Right lobe of liver (tissue), 6 donors: ENCODE measurements at regions of chr4 and their contacts with region 1.

Region 1: GRCh38 chr4:88659055-88659889 is 38.4 kb downstream of the NAP1L5 start:
- DNase-seq: peak in 2 of 3 donors; percentile 27 to 51
- ATAC-seq: peak; percentile 93 to 98 (median 96)
- H3K4me3 ChIP-seq: no peak overlapping the region
- H3K27ac ChIP-seq: no peak overlapping the region
- H3K4me1 ChIP-seq: peaks cover 0 to 17% (median 3%) of the 10 kb centered on the region in 4 donors
- H3K27me3 ChIP-seq: no peaks in the 10 kb centered on the region
- CTCF ChIP-seq: peak; percentile 72 to 86 (median 82)
- POLR2A ChIP-seq: no peak

Region 2: DNA sequence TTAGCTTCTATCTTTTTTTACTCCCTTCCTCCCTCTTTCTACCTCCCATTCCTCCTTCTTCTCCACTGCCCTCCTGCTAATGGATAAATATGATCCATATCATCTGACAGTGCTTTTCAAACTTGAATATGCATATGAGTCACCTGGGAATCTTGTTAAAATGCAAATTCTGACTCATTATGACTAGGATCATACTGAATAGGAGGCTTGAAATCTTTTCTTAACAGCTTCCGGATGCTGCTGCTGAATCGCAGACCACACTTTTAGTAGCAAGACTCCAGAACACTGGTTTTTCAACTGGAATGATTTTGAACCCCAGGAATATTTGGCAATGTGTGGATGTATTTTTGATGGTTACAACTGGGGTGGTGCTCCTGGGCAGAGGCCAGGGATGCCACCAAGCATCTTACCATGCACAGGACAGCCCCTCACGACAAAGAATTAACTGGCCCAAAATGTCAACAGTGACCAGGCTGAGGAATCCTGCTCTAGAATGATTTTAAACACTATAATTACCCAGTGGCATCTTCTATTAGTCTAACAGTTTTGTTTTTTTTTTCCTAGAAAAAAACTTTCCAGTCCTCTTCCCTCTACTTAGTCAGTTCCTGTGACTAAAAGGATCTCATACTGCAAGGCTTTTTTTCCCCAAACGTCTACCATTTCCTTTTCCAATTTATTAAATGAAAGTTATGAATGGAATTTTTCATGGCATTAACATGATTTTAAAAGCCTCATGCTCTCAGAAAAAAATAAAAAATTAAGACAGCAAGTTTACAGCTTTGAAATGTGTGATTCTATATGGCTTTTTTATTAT is 125.1 kb before region 1 on chr4:
- intact Hi-C with region 1: loop called in 1 of 2 experiments (anchors 10 kb)
- DNase-seq: no peak
- ATAC-seq: peak in 2 of 4 donors; percentile 40 to 50
- H3K4me3 ChIP-seq: no peak overlapping the region
- H3K27ac ChIP-seq: no peak overlapping the region
- H3K4me1 ChIP-seq: no peaks in the 10 kb centered on the region
- H3K27me3 ChIP-seq: no peaks in the 10 kb centered on the region
- CTCF ChIP-seq: no peak
- POLR2A ChIP-seq: no peak